Right ventricle myocardium inferior (tissue), 1 donor: ENCODE measurements at regions of chr7 and their contacts with region 1.

Region 1: DNA sequence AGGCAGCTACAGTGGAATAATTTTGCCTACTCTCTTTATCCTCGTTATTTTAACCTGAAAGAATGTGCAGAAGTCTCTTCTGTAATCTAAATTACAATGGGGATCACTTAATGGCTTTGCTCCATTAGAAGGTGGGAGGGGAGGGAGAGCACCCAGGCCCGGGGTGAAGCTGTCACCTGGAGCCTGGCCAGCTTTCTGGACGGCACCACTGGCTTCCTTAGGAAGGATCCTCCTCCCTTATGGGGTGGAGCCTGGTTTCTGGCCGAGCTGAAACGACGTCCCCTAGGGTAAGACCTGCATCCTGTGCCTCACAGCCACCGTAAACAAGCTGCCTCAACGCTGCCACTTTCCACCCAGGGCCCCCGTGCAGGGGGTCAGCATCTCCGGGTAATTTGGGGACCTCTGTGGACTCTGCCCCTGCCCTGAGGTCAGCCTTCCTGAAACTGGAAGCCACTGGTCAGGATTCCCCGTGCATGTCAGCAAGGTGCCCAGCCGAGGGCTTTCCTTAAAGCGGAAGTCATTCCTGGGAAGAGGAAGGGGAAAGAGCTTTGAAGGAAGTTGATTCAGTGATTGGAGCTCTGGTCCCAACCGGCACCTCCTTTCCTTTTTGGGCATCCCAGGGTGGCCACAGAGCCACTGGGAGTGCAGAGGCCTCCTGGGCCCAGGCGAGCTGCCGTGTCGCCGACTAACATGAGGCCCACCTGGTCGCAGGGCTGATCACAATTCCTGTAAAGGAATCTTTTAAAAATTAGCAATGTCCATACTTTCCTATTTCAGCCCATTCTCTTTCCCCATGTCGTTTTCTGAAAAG is 569.1 kb downstream of the DNAJB6 start:
- DNase-seq: no peak
- ATAC-seq: peak; percentile 46

Region 2: DNA sequence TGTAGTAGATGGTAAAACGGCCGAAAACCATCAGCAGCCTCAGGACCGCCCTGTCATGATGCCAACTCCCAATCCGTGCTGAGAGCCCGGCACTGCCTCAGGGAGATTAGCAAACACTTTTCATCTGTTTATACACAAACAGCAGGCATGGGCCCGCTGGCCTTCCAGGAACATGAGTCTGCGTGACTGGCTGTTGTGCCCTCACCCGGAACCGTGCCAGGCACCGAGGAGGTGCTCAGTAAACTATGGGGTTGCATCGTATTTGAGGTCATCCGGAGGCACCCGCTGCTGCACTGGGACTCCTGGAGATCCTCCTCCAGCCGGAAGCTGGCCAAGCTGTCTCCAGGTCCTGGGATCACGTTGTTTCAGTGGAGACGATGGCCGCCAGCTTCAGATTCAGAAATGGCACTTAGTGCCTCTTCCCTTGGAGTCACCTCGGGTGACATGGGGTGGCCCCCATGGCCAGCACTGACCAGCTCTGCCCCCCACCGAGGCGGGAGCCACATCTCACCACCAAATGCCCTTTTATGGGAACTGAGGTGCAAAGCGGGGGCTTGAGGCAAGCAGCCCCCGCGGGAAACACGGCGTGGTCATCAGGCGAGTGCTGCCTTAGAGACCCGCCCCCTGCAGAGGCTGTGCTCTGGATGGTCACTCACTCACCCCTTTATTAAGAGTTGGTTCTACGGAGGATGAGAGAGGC is 95.9 kb after region 1 on chr7:
- intact Hi-C with region 1: loop called (anchors 10 kb)
- DNase-seq: no peak
- ATAC-seq: no peak

Region 3: GRCh38 chr7:158050978-158051651 is 145.3 kb after region 1 on chr7:
- intact Hi-C with region 1: loop called (anchors 10 kb)
- DNase-seq: no peak
- ATAC-seq: no peak

Region 4: DNA sequence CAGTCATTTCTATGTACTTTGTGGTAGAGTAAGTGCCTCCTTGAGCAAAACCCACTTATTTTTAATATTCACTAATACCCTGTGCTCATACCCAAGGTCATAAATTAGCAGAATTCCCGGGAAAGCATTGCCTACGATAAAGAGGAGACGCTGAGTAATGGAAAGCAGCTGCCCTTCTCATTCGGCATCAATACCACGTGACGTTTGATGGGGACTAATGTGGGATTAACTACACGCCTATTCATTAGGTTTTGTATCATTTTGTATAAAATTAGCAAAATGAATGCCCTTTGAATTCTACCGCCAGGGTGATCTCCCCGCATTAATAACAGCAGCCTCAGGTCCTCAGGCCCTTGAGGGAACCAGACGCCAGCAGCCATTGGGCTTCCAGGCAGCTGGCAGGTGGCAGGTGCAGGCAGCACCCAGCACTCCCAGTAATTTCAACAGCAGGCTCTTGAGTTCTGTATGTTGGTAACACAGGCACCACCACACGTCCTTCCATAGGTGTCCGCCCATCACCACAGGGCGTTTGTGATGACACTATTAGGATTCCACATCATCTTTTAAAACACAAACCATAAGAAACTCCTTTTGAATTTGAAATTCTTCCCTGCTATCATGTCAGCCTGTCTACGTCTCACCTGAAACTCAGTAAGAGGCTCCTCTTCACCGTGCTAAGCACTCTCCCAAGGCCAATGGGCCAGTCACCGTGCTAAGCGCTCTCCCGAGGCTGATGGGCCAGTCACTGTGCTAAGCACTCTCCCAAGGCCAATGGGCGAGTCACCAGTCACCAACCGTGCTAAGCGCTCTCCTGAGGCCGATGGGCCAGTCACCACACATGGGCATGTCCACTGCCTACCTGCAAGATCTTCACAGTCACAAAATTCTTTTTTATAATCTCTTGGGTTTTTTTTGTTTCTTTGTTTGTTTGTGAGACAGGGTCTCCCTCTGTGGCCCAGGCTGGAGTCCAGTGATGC is 172.4 kb after region 1 on chr7:
- intact Hi-C with region 1: no loop called
- DNase-seq: no peak
- ATAC-seq: no peak